Activated CD4-positive, alpha-beta T cell treated with anti-CD3 and anti-CD28 coated beads, Interleukin-2, amount 10 ng/mL, durations not matched to agents 24 days and 14 days (primary cell): ENCODE measurements at regions of chr22 and their contacts with region 1.

Region 1: GRCh38 chr22:29040385-29041275 is 21.0 kb downstream of the C22orf31 start:
- DNase-seq: peak; percentile 88
- H3K4me3 Mint-ChIP-seq: no peak overlapping the region
- H3K27ac Mint-ChIP-seq: no peak overlapping the region
- H3K4me1 Mint-ChIP-seq: no peaks in the 10 kb centered on the region
- H3K27me3 Mint-ChIP-seq: peaks cover 22% of the 10 kb centered on the region

Region 2: GRCh38 chr22:28600546-28601143 is 440.0 kb before region 1 on chr22:
- intact Hi-C with region 1: loop called (anchors 1 kb)
- DNase-seq: peak; percentile 74
- H3K4me3 Mint-ChIP-seq: no peak overlapping the region
- H3K27ac Mint-ChIP-seq: no peak overlapping the region
- H3K4me1 Mint-ChIP-seq: no peaks in the 10 kb centered on the region
- H3K27me3 Mint-ChIP-seq: peaks cover 36% of the 10 kb centered on the region

Region 3: DNA sequence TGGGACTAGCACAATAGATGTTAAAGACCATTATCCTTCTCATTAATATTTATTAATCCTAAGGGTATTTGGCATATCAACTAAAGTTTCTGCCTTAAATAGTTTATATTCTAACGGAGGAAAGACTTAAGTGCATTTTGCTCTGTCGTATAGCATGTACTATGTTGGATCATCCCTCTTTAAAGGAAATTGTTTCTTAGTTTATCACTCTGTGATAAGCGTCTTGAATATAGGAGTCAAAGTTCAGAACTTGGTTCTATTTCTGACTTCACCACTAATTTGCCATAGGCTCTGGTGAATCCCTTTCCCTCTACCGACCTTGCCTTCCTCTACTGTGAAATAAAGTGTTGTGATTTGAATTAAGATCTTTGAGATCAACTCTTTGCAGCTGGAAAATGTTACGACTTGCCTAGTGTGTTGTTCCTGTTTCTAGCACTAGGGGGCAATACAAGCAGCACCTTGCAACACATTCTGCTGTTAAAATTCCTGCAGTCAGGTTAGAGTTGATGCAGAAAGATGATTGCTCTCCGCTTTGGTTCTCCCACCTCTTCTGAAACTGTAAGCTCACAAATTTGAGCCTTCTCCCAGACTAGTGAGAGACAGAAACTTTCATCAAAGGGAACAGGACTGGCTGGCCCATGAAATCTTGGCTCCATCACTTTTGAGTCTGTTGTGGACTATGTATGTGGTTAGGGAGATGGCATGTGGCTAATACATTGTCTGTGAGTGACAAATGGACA is 185.1 kb before region 1 on chr22:
- intact Hi-C with region 1: loop called (anchors 1 kb)
- DNase-seq: peak; percentile 85
- H3K4me3 Mint-ChIP-seq: no peak overlapping the region
- H3K27ac Mint-ChIP-seq: no peak overlapping the region
- H3K4me1 Mint-ChIP-seq: no peaks in the 10 kb centered on the region
- H3K27me3 Mint-ChIP-seq: peaks cover 13% of the 10 kb centered on the region